Activated naive CD4-positive, alpha-beta T cell treated with anti-CD3 and anti-CD28 coated beads for 36 hours (primary cell): ENCODE measurements at regions of chr13 and their contacts with region 1.

Region 1: GRCh38 chr13:78137404-78138142 is 218.9 kb upstream of the EDNRB start:
- DNase-seq: peak; percentile 8
- H3K4me3 Mint-ChIP-seq: peak overlapping the region; percentile 21
- H3K27ac Mint-ChIP-seq: no peak overlapping the region
- H3K4me1 Mint-ChIP-seq: peaks cover 6% of the 10 kb centered on the region
- H3K27me3 Mint-ChIP-seq: peaks cover 3% of the 10 kb centered on the region

Region 2: DNA sequence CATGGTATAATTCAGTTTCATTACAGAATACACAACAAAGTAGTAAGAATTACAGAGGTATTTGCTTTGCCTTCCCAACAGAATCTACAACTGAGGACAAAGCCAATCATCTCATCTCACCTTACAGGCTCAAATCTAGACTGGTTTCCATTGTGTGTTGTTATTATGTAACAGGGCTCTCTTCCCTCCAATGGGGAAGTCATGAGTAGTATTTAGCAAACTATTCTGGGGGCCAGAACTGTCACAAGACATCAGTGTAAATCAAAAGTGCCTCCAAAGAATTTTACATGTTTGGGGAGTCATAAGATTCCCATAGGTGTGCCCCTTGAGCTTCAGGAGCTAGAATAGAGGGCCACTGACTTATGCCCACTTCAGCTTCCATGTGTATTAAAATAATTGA is 31.9 kb before region 1 on chr13:
- CTCF ChIA-PET with region 1: no interaction called
- intact Hi-C with region 1: no loop called
- DNase-seq: no peak
- H3K4me3 Mint-ChIP-seq: no peak overlapping the region
- H3K27ac Mint-ChIP-seq: no peak overlapping the region
- H3K4me1 Mint-ChIP-seq: no peaks in the 10 kb centered on the region
- H3K27me3 Mint-ChIP-seq: peaks cover 3% of the 10 kb centered on the region

Region 3: DNA sequence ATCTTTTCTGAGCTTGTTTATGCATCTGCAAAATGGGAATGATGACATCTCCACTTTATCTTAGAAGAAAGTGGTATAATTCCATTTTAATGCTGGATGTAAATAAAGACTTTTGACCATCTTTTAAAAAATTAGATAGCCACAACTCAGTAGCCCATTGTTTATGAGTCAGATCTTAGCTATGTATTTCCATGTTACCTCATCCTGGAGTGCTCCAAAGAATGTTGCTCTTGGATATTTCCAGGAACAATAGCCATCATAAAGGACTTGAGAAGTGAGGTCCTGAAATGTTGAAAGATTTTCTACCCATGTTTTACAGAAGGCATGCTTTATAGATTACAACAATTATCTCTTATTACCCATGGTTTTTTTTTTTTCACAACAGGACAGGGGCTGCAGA is 10.3 kb after region 1 on chr13:
- CTCF ChIA-PET with region 1: interaction called, 13 read pairs
- intact Hi-C with region 1: no loop called
- DNase-seq: no peak
- H3K4me3 Mint-ChIP-seq: no peak overlapping the region
- H3K27ac Mint-ChIP-seq: no peak overlapping the region
- H3K4me1 Mint-ChIP-seq: no peaks in the 10 kb centered on the region
- H3K27me3 Mint-ChIP-seq: peaks cover 7% of the 10 kb centered on the region

Region 4: GRCh38 chr13:78241278-78241919 is 103.8 kb after region 1 on chr13:
- CTCF ChIA-PET with region 1: interaction called, 5 read pairs
- intact Hi-C with region 1: loop called (anchors 5 kb)
- DNase-seq: peak; percentile 45
- H3K4me3 Mint-ChIP-seq: no peak overlapping the region
- H3K27ac Mint-ChIP-seq: no peak overlapping the region
- H3K4me1 Mint-ChIP-seq: no peaks in the 10 kb centered on the region
- H3K27me3 Mint-ChIP-seq: no peaks in the 10 kb centered on the region

Region 5: DNA sequence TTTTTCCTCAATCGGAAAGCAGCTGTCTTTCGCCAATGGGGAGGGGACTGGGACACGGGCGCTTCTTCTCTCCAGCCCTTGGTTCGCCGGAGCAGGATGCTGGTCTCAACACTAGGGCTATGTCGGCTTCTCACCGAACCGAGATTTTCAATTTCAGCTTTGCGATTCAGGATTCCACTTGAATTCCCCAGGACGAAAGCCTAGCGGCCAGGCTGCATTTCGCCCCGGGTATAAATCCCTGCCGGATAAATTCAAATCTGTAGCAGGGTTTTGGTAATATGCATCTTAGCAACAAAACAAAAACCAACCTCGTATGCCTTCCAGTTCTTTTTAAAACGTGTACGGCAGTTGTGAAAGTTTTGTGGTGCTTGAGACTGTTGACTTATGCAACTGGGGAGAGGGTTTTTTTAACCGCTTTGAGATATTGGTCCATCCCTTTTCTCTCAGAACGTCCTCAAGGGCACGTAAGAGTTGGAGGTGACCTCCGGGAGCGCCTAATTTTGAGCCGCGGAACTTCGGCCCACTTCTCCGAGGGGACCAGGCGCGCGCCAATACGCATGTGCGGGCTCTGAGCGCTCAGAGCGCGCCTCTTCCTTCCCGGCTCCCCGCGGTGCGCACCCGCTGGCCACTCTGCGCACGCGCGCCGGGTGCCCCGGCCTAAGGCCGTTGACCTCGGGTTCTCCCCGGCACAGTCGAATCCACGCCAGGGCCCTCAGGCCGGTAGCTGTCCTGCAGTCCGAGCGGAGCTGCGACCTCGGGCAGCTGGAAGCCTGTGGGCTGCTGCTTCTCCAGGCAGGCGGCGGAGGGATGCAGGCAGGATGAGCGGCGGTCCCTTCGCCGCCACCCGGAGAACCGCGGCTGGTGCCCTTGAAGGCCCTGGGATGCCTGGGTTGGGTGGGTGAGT is 458.2 kb after region 1 on chr13:
- CTCF ChIA-PET with region 1: interaction called, 4 read pairs
- intact Hi-C with region 1: loop called (anchors 10 kb)
- DNase-seq: no peak
- H3K4me3 Mint-ChIP-seq: peak overlapping the region; percentile 29
- H3K27ac Mint-ChIP-seq: no peak overlapping the region
- H3K4me1 Mint-ChIP-seq: peaks cover 10% of the 10 kb centered on the region
- H3K27me3 Mint-ChIP-seq: peaks cover 75% of the 10 kb centered on the region

Region 6: GRCh38 chr13:78787190-78787589 is 649.6 kb after region 1 on chr13:
- CTCF ChIA-PET with region 1: no interaction called
- intact Hi-C with region 1: no loop called
- DNase-seq: no peak
- H3K4me3 Mint-ChIP-seq: no peak overlapping the region
- H3K27ac Mint-ChIP-seq: no peak overlapping the region
- H3K4me1 Mint-ChIP-seq: no peaks in the 10 kb centered on the region
- H3K27me3 Mint-ChIP-seq: peaks cover 16% of the 10 kb centered on the region

Region 7: GRCh38 chr13:78978381-78978998 is 840.9 kb after region 1 on chr13:
- CTCF ChIA-PET with region 1: interaction called, 33 read pairs
- intact Hi-C with region 1: loop called (anchors 1 kb)
- DNase-seq: peak; percentile 63
- H3K4me3 Mint-ChIP-seq: no peak overlapping the region
- H3K27ac Mint-ChIP-seq: no peak overlapping the region
- H3K4me1 Mint-ChIP-seq: no peaks in the 10 kb centered on the region
- H3K27me3 Mint-ChIP-seq: peaks cover 10% of the 10 kb centered on the region

Region 8: DNA sequence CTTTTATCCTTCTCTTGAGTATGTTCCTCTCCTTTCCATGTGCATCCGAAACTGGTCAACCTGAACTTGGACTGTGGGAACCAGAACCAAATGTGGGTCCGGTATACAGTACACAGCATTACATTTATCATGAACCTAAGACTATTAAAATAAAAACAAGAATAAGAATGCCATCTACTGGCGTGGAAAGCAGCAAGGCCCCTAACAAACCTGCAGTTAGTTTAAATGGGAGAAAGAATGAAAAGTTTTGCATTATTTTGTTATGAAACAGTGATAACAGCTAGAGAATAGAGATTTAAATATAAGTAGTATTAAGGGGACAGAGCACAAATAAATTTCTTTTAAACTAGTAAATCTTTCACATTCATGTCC is 1109.0 kb after region 1 on chr13:
- CTCF ChIA-PET with region 1: no interaction called
- intact Hi-C with region 1: loop called (anchors 1 kb)
- DNase-seq: no peak
- H3K4me3 Mint-ChIP-seq: no peak overlapping the region
- H3K27ac Mint-ChIP-seq: no peak overlapping the region
- H3K4me1 Mint-ChIP-seq: no peaks in the 10 kb centered on the region
- H3K27me3 Mint-ChIP-seq: peaks cover 3% of the 10 kb centered on the region

Region 9: GRCh38 chr13:79541426-79542049 is 1404.0 kb after region 1 on chr13:
- CTCF ChIA-PET with region 1: no interaction called
- intact Hi-C with region 1: loop called (anchors 10 kb)
- DNase-seq: no peak
- H3K4me3 Mint-ChIP-seq: no peak overlapping the region
- H3K27ac Mint-ChIP-seq: no peak overlapping the region
- H3K4me1 Mint-ChIP-seq: peaks cover 5% of the 10 kb centered on the region
- H3K27me3 Mint-ChIP-seq: no peaks in the 10 kb centered on the region